ENCODE measurements at regions of chr3 and their contacts with region 1.

Region 1: GRCh38 chr3:53938645-53939044 is 47.0 kb upstream of the SELENOK start:
- DNase-seq: peak; percentile 52
- ATAC-seq: peak; percentile 73
- H3K4me3 Mint-ChIP-seq: no peak overlapping the region
- H3K27ac Mint-ChIP-seq: no peak overlapping the region
- H3K4me1 Mint-ChIP-seq: no peaks in the 10 kb centered on the region
- H3K27me3 Mint-ChIP-seq: no peaks in the 10 kb centered on the region
- CTCF ChIP-seq: peak; percentile 70

Region 2: DNA sequence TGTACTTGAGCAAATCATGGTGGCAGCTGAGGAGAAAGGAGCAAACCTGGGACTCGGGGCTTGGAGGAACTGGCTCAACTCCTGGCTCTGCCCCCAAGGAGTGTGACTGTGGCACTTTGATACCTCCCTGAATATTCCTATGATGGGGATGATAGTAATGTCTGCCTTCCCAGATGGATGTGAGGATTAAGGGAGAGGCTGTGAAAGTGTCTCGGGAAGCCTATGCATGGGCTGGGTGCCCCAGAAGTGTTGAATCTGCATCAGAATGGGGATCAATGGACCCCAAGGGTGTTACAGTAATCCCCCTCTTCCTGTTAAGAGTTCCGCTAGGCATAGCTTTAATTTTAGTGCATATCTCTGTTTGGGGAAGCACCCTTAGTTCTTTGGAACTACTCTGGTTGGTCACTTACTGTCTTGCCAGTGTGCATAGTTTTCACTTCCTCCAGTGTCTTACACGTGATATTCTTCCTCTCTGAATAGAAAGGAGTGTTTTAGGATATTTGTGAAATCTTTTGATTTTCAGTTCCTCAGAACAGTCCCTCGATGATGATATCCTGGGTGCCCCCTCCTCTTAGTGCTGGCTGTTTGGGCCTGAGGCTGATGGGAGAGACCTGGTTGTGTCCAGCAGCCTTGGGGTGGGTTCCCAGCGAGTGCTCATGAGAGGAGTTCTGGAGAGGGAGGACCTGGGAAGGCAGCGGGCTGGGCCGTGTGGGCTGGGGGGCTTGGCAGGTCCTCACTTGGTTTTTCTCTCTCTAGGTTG is 190.0 kb before region 1 on chr3:
- CTCF ChIA-PET with region 1: no interaction called
- POLR2A ChIA-PET with region 1: no interaction called
- DNase-seq: no peak
- ATAC-seq: peak; percentile 78
- H3K4me3 Mint-ChIP-seq: peak overlapping the region; percentile 6; the same call in 1 of the 2 replicates
- H3K27ac Mint-ChIP-seq: peak overlapping the region; percentile 45; the same call in 1 of the 2 replicates
- H3K4me1 Mint-ChIP-seq: peaks cover 48% of the 10 kb centered on the region
- H3K27me3 Mint-ChIP-seq: peaks cover 8% of the 10 kb centered on the region
- CTCF ChIP-seq: no peak

Region 3: DNA sequence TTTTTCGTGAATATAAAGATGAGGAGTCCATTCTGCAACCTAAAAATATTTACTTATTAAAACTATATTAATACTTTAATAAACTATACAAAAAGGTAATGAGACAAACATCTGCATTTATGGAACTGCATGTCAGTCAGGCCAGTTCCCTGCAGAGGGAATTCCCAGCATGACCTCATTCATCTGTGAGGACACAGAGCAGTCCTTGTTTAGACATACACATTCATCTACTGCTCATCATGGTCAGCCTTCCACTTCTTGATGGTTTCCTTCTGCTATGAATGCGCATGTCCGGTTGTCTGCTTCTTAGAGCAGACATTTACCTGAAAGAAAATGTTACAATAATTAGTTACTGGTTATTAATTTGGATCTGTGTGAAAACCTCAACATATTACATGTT is 53.4 kb before region 1 on chr3:
- CTCF ChIA-PET with region 1: no interaction called
- POLR2A ChIA-PET with region 1: no interaction called
- DNase-seq: no peak
- ATAC-seq: no peak
- H3K4me3 Mint-ChIP-seq: no peak overlapping the region
- H3K27ac Mint-ChIP-seq: no peak overlapping the region
- H3K4me1 Mint-ChIP-seq: peaks cover 17% of the 10 kb centered on the region
- H3K27me3 Mint-ChIP-seq: no peaks in the 10 kb centered on the region
- CTCF ChIP-seq: no peak

Region 4: DNA sequence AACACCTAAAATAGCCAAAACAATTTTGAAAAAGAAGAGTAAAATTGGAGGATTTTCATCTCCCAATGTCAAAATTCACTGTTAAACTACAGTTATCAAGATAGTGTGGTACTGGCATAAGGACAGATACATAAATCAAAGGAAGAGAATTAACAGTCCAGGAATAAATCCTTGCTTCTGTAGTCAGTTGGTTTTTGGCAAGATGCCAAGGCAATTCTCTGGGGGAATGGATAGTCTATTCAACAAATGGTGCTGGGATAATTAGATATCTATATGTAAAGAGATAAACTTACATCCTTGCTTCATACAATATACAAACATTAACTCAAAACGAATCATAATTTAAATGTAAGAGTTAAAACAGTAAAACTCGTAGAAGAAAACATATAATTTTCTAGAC is 10.9 kb after region 1 on chr3:
- CTCF ChIA-PET with region 1: no interaction called
- POLR2A ChIA-PET with region 1: no interaction called
- DNase-seq: no peak
- ATAC-seq: no peak
- H3K4me3 Mint-ChIP-seq: no peak overlapping the region
- H3K27ac Mint-ChIP-seq: no peak overlapping the region
- H3K4me1 Mint-ChIP-seq: no peaks in the 10 kb centered on the region
- H3K27me3 Mint-ChIP-seq: peaks cover 10% of the 10 kb centered on the region
- CTCF ChIP-seq: no peak

Region 5: DNA sequence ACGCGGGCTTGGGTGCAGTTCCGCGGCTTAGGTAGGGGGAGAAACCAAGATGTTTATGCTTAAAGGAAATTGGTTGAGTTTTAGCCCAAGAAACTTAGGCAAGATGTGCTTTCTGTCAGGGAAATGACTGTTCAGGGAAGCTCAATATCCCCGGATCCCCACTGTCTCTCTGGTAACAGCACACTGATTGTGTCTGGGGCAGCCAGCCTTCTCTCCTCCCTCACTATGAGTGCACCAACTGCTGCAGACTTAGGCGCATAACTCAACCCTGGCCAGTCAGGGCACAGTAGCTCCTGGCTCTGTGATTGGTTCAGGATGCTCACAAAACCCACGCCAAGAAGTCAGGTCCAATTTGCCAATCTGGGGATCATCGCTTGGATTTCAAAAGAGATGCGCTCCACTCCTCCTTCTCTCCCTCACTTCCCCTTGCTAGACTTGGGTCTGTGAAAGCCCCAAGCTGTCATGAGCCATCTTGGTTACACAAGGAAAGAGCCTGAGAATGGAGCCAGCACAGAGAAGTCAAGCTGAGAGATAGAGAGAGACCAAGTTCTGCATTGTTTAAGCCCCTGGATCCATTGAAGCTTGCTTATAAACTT is 141.2 kb after region 1 on chr3:
- CTCF ChIA-PET with region 1: interaction called, 10 read pairs
- POLR2A ChIA-PET with region 1: no interaction called
- DNase-seq: no peak
- ATAC-seq: peak; percentile 78
- H3K4me3 Mint-ChIP-seq: peak overlapping the region; percentile 15
- H3K27ac Mint-ChIP-seq: peak overlapping the region; percentile 46
- H3K4me1 Mint-ChIP-seq: peaks cover 54% of the 10 kb centered on the region
- H3K27me3 Mint-ChIP-seq: peaks cover 10% of the 10 kb centered on the region
- CTCF ChIP-seq: no peak

Region 6: DNA sequence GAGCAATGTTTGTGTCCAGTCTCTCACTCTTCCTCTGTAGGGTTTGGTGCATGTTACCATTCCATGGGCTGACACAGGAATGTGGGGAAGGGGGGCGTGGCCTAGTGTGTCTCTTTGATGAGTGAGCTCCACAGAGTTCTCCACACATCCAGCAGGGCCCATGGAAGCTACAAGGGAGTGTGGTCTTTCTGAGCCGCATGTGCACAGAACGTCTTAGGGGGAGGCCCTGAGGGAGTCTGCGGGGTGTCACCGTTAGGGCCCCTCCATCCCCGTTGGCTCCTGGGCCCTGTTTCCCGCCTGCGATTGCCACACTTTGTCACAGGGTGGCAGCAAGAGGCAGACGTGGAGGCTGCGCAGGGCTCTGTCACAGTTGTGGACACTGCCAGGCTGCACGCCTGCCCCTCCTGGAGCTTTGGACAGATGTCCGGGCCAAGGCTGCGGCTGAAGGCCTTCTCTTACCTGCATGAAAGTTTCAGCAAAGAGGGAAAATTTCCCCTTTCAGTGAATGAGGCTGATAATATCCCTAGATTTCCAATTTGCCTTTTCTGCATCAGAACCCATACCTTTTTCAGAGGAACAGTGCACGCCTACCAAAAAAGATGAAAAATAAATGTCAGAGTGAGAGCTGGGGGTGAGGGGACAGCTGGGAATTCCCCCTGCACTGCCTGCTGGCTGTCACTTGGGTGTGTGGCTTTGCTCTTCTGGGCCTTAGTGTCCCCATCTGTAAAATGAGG is 208.0 kb after region 1 on chr3:
- CTCF ChIA-PET with region 1: interaction called, 34 read pairs
- POLR2A ChIA-PET with region 1: no interaction called
- DNase-seq: peak; percentile 83
- ATAC-seq: peak; percentile 96
- H3K4me3 Mint-ChIP-seq: peak overlapping the region; percentile 41; the same call in 1 of the 2 replicates
- H3K27ac Mint-ChIP-seq: no peak overlapping the region
- H3K4me1 Mint-ChIP-seq: peaks cover 15% of the 10 kb centered on the region
- H3K27me3 Mint-ChIP-seq: no peaks in the 10 kb centered on the region; the same call in 1 of the 2 replicates
- CTCF ChIP-seq: peak; percentile 55

Region 7: GRCh38 chr3:54374214-54374855 is 435.7 kb after region 1 on chr3:
- CTCF ChIA-PET with region 1: interaction called, 27 read pairs
- POLR2A ChIA-PET with region 1: no interaction called
- DNase-seq: peak; percentile 62
- ATAC-seq: peak; percentile 94
- H3K4me3 Mint-ChIP-seq: no peak overlapping the region
- H3K27ac Mint-ChIP-seq: no peak overlapping the region
- H3K4me1 Mint-ChIP-seq: no peaks in the 10 kb centered on the region
- H3K27me3 Mint-ChIP-seq: no peaks in the 10 kb centered on the region
- CTCF ChIP-seq: peak; percentile 60

Region 8: GRCh38 chr3:54427941-54428871 is 489.6 kb after region 1 on chr3:
- CTCF ChIA-PET with region 1: interaction called, 15 read pairs
- POLR2A ChIA-PET with region 1: no interaction called
- DNase-seq: peak; percentile 71
- ATAC-seq: peak; percentile 56
- H3K4me3 Mint-ChIP-seq: no peak overlapping the region
- H3K27ac Mint-ChIP-seq: no peak overlapping the region
- H3K4me1 Mint-ChIP-seq: peaks cover 21% of the 10 kb centered on the region
- H3K27me3 Mint-ChIP-seq: no peaks in the 10 kb centered on the region
- CTCF ChIP-seq: peak; percentile 48; the same call in 1 of the 2 replicates

Measured in WTC11 (cell line).